ENCODE measurements at regions of chr19 and their contacts with region 1.

Region 1: GRCh38 chr19:46753420-46754155 is 7.3 kb upstream of the STRN4 start:
- DNase-seq: peak; percentile 85
- ATAC-seq: peak; percentile 84
- H3K4me3 Mint-ChIP-seq: no peak overlapping the region
- H3K27ac Mint-ChIP-seq: no peak overlapping the region
- H3K4me1 Mint-ChIP-seq: peaks cover 26% of the 10 kb centered on the region
- H3K27me3 Mint-ChIP-seq: no peaks in the 10 kb centered on the region

Region 2: GRCh38 chr19:46661020-46661731 is 92.4 kb before region 1 on chr19 and contains the start of gene DACT3:
- CTCF ChIA-PET with region 1: interaction called, 15 read pairs
- DNase-seq: peak; percentile 100
- ATAC-seq: peak; percentile 94
- H3K4me3 Mint-ChIP-seq: peak within 1 kb of the TSS; percentile 67
- H3K27ac Mint-ChIP-seq: peak within 1 kb of the TSS; percentile 76
- H3K4me1 Mint-ChIP-seq: peaks cover 17% of the 10 kb centered on the region
- H3K27me3 Mint-ChIP-seq: peaks cover 37% of the 10 kb centered on the region
- total RNA-seq, gene DACT3: 0.12 to 1.2 TPM

Region 3: GRCh38 chr19:46717034-46717723 is 36.4 kb before region 1 on chr19 and contains the start of gene PRKD2:
- CTCF ChIA-PET with region 1: interaction called, 10 read pairs
- DNase-seq: peak; percentile 94
- ATAC-seq: peak; percentile 59
- H3K4me3 Mint-ChIP-seq: peak within 1 kb of the TSS; percentile 95
- H3K27ac Mint-ChIP-seq: peak within 1 kb of the TSS; percentile 96
- H3K4me1 Mint-ChIP-seq: peaks cover 36% of the 10 kb centered on the region
- H3K27me3 Mint-ChIP-seq: no peaks in the 10 kb centered on the region
- total RNA-seq, gene PRKD2: 147 to 187 TPM

Region 4: DNA sequence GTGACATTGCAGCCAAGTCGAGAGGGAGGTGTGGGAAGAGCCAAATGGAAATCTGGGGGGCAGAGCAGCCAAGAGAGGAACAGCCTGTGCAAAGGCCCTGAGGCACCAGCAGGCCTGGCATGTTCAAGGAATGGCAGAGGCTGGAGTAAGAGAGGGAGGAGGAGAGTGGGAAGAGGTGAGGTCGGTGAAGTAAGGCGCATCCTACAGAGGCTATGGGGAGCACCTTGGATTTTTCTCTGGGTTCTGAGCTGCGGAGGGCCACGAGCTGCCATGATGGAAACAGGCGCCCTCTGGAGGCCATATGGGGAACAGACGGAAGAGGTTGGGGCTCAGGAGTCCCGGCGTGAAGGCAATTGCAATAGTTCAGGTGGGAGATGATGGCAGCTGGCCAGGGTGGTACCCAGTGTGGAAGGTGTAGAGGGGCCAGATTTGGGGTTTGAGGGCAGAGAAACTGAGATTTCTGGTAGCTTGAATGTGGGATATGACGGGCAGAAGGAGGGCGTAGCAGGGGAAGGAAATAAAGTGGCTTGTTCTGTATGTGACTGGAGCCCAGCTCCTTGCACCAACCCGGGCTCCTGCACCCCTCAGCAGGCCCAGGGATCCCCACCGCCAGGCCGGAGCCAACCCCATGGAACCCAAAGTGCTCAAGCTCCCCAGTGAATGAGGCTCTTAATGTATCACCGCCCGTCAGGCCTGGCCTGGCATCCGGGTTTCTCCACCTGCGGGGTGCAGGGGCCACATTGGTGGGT is 13.2 kb after region 1 on chr19:
- CTCF ChIA-PET with region 1: interaction called, 36 read pairs
- DNase-seq: peak; percentile 77
- ATAC-seq: peak; percentile 81
- H3K4me3 Mint-ChIP-seq: no peak overlapping the region
- H3K27ac Mint-ChIP-seq: no peak overlapping the region
- H3K4me1 Mint-ChIP-seq: peaks cover 4% of the 10 kb centered on the region
- H3K27me3 Mint-ChIP-seq: no peaks in the 10 kb centered on the region

Region 5: DNA sequence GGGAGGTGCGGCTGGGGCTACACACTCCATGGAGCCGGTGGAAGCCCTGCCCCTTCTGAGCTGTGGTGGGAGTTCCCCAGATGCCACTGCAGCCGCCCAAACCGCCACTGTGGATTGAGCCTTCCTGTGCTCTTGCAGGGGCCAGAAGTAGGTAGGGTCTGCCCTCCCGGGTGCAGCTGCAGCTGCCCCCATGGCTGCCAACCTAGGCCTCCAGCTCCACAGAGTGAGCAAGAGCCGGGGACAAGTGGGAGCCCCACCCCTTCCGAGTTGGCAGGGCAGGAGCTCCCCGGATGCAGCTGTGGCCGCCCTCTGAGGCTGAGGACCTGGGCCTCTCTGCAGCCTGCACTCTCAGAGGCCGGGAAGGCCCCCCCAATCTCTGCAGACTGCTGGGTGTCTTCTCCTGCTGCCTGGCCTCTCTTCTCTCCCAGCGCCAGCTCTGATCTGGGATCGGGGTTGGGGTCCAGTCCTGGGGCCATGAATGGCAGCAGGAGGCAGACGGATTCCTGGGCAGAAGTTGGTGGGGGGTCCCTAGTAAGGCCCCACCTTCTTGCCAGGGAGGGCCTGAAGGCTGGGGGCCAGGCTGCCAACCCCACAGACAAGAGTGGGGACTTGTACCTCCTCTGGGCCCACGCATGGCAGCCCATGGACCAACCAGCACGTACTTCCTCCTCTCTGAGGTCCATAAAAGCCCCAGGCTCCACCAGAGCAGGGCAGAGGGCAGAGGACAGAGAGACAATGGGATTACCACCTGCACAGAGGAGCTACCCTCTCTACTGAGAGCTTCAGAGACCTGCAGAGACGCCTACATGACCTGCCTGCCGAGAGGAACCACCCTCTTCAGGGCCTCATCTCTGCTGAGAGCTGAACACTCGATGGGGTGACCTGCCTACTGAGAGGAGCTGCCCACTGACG is 68.2 kb after region 1 on chr19:
- CTCF ChIA-PET with region 1: interaction called, 23 read pairs
- DNase-seq: peak; percentile 85
- ATAC-seq: peak; percentile 89
- H3K4me3 Mint-ChIP-seq: peak overlapping the region; percentile 18
- H3K27ac Mint-ChIP-seq: peak overlapping the region; percentile 83
- H3K4me1 Mint-ChIP-seq: peaks cover 57% of the 10 kb centered on the region
- H3K27me3 Mint-ChIP-seq: no peaks in the 10 kb centered on the region

Region 6: GRCh38 chr19:46845959-46846690 is 92.5 kb after region 1 on chr19:
- CTCF ChIA-PET with region 1: interaction called, 203 read pairs
- DNase-seq: no peak
- ATAC-seq: no peak
- H3K4me3 Mint-ChIP-seq: no peak overlapping the region
- H3K27ac Mint-ChIP-seq: no peak overlapping the region
- H3K4me1 Mint-ChIP-seq: peaks cover 18% of the 10 kb centered on the region
- H3K27me3 Mint-ChIP-seq: no peaks in the 10 kb centered on the region

Region 7: GRCh38 chr19:46878613-46879375 is 125.2 kb after region 1 on chr19:
- CTCF ChIA-PET with region 1: no interaction called
- DNase-seq: no peak
- ATAC-seq: peak; percentile 36
- H3K4me3 Mint-ChIP-seq: no peak overlapping the region
- H3K27ac Mint-ChIP-seq: no peak overlapping the region
- H3K4me1 Mint-ChIP-seq: peaks cover 5% of the 10 kb centered on the region
- H3K27me3 Mint-ChIP-seq: no peaks in the 10 kb centered on the region